T-cell (primary cell): ENCODE measurements at regions of chr17 and their contacts with region 1.

Region 1: GRCh38 chr17:47970704-47971463 is at the start of gene CDK5RAP3:
- DNase-seq: peak; percentile 93 to 99 (median 96)
- ATAC-seq: peak; percentile 98 to 99 (median 99)
- H3K4me3 ChIP-seq: peak within 1 kb of the TSS; percentile 63 to 75
- H3K4me3 Mint-ChIP-seq: peak within 1 kb of the TSS; percentile 95 to 99 (median 96)
- H3K27ac ChIP-seq: peak within 1 kb of the TSS; percentile 19
- H3K27ac Mint-ChIP-seq: peak within 1 kb of the TSS; percentile 77
- H3K4me1 ChIP-seq: peaks cover 2 to 25% of the 10 kb centered on the region in 2 experiments
- H3K4me1 Mint-ChIP-seq: peaks cover 28 to 36% (median 32%) of the 10 kb centered on the region in 3 donors
- H3K27me3 ChIP-seq: peaks cover 0 to 7% of the 10 kb centered on the region in 2 experiments
- H3K27me3 Mint-ChIP-seq: no peaks in the 10 kb centered on the region
- total RNA-seq, gene CDK5RAP3: 247 to 349 (median 318) TPM

Region 2: DNA sequence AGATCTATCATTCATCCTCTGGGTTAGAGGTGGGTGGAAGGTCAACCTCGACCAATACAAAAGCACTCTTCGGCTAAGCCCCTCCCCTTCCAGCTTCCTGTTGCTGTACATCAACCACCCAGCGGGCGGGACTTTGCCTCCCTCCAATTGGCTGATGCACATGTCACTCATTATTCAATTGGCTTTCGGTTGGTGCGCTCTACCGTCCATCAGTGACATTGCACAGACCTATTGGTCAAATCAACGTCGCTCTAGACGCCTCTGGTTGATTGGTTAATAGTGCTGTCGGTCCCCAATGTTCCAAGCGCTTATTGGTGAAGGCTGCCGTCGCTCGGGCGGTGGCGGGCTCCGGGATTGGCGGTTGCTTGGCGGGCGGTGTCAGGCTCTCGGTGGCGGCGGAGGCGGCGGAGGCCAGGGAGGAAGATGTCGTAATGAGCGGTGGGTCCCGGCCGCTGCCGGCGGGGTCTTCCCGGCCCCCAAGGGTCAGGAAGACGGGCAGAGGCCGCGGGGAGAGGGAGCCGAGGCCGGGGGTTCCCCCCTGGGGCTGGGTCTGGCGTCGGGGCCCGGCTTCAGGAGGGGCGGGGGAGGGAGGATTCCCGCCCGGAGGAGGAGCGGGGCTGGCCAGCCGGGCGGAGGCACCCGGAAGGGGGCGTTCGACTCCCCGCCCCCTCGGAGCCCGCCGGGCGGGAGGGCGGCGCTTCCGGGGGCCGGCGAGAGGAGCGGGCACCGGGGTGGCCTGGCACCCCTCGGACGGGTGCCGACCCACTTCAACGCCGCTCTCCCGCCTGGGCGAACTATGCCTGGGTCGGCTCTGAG is 74.8 kb before region 1 on chr17 and contains the start of gene SP2:
- CTCF ChIA-PET with region 1: interaction called in 1 of 2 experiments, 12 read pairs
- POLR2A ChIA-PET with region 1: interaction called in 1 of 2 experiments, 4 read pairs
- DNase-seq: peak; percentile 95 to 100 (median 99)
- ATAC-seq: peak; percentile 88 to 91 (median 89)
- H3K4me3 ChIP-seq: peak within 1 kb of the TSS; percentile 94 to 95
- H3K4me3 Mint-ChIP-seq: peak within 1 kb of the TSS; percentile 90 to 98 (median 98)
- H3K27ac ChIP-seq: peak within 1 kb of the TSS; percentile 92
- H3K27ac Mint-ChIP-seq: peak within 1 kb of the TSS; percentile 98 to 100
- H3K4me1 ChIP-seq: peaks cover 11 to 23% of the 10 kb centered on the region in 2 experiments
- H3K4me1 Mint-ChIP-seq: peaks cover 45 to 55% (median 51%) of the 10 kb centered on the region in 3 donors
- H3K27me3 ChIP-seq: no peaks in the 10 kb centered on the region
- H3K27me3 Mint-ChIP-seq: no peaks in the 10 kb centered on the region
- total RNA-seq, gene SP2: 27.1 to 41.6 (median 32.8) TPM

Region 3: DNA sequence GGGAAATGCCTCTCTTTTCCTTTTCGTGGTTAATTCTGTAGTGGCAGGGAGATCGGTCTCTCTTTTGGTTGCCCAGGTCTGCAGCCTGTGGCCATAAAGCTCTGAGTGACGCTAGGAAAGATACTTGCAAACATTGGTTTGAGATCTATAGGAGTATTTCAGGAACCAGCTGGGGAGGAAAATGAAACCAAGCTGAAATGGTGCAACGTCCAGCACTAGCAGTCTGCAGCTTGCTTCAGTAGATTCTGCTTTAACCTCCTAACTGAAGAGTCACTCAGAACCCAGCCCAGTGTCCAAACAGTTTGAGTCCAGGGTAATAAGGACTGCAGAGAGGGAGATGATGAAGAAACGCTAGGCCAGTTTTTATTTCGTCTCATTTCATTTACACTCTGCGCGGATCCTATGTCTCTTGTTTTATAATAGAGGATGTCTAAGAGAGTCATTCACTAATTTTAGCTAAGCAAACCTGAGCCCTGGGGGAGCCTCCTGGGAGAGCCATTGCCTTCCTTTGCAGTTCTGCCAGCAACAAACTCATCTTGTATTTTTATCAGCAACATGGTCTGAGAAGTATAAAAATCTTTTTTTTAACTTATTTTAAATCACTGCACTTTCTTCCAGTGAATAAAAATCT is 62.8 kb before region 1 on chr17:
- CTCF ChIA-PET with region 1: no interaction called
- POLR2A ChIA-PET with region 1: no interaction called
- DNase-seq: no peak
- ATAC-seq: no peak
- H3K4me3 ChIP-seq: no peak overlapping the region
- H3K4me3 Mint-ChIP-seq: no peak overlapping the region
- H3K27ac ChIP-seq: no peak overlapping the region
- H3K27ac Mint-ChIP-seq: no peak overlapping the region
- H3K4me1 ChIP-seq: peaks cover 0 to 5% of the 10 kb centered on the region in 2 experiments
- H3K4me1 Mint-ChIP-seq: peaks cover 39 to 49% (median 42%) of the 10 kb centered on the region in 3 donors
- H3K27me3 ChIP-seq: no peaks in the 10 kb centered on the region
- H3K27me3 Mint-ChIP-seq: no peaks in the 10 kb centered on the region

Region 4: GRCh38 chr17:47941236-47941994 is 29.5 kb before region 1 on chr17 and contains the start of gene PNPO:
- CTCF ChIA-PET with region 1: interaction called, 10 to 59 read pairs
- POLR2A ChIA-PET with region 1: interaction called in 1 of 2 experiments, 6 read pairs
- DNase-seq: peak; percentile 79 to 98 (median 94)
- ATAC-seq: peak; percentile 97 to 99 (median 98)
- H3K4me3 ChIP-seq: peak within 1 kb of the TSS; percentile 61 to 86
- H3K4me3 Mint-ChIP-seq: peak within 1 kb of the TSS; percentile 85 to 87 (median 86)
- H3K27ac ChIP-seq: peak within 1 kb of the TSS; percentile 77
- H3K27ac Mint-ChIP-seq: peak within 1 kb of the TSS; percentile 82 to 86
- H3K4me1 ChIP-seq: peaks cover 17 to 53% of the 10 kb centered on the region in 2 experiments
- H3K4me1 Mint-ChIP-seq: peaks cover 38 to 48% (median 47%) of the 10 kb centered on the region in 3 donors
- H3K27me3 ChIP-seq: no peaks in the 10 kb centered on the region
- H3K27me3 Mint-ChIP-seq: no peaks in the 10 kb centered on the region
- total RNA-seq, gene PNPO: 10.3 to 18.5 (median 15.7) TPM

Region 5: DNA sequence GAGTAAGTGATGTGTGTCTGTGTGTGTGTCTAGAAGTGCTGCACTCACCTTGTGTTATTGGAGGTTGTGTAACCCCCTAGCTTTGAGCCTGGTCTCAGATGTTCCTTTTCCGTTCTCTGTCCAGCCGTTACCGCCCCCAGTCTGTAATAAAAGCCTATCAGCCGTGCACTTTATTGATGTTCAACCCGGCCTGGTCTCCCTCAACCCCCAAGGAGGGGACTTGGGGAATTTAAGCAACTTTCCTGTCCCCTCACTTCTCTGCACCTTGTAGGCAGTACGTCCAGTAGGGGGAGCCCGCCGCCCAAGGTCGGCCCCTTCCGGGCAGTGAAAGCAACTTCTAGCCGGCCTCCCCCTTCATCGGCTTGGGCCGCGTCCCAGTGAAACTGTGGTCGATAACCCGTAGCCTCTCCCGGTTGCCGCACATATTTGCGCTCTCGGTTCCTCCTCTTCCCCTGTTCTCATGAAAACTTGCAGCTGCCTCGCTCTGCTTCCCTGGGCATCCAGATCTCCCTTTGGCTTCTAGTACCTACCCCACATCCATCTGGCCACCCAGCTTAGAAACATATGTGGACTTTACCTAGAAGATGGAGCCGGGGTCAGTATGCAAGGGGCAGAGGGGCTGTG is 21.6 kb before region 1 on chr17:
- CTCF ChIA-PET with region 1: interaction called, 10 to 59 read pairs
- POLR2A ChIA-PET with region 1: interaction called, 5 to 6 read pairs
- DNase-seq: peak; percentile 24 to 82 (median 66)
- ATAC-seq: peak; percentile 69 to 75 (median 72)
- H3K4me3 ChIP-seq: peak overlapping the region; percentile 36 to 42
- H3K4me3 Mint-ChIP-seq: peak overlapping the region; percentile 61 to 72 (median 67)
- H3K27ac ChIP-seq: peak overlapping the region; percentile 21
- H3K27ac Mint-ChIP-seq: peak overlapping the region; percentile 83 to 92
- H3K4me1 ChIP-seq: peaks cover 26 to 44% of the 10 kb centered on the region in 2 experiments
- H3K4me1 Mint-ChIP-seq: peaks cover 37 to 47% (median 42%) of the 10 kb centered on the region in 3 donors
- H3K27me3 ChIP-seq: no peaks in the 10 kb centered on the region
- H3K27me3 Mint-ChIP-seq: no peaks in the 10 kb centered on the region

Region 6: DNA sequence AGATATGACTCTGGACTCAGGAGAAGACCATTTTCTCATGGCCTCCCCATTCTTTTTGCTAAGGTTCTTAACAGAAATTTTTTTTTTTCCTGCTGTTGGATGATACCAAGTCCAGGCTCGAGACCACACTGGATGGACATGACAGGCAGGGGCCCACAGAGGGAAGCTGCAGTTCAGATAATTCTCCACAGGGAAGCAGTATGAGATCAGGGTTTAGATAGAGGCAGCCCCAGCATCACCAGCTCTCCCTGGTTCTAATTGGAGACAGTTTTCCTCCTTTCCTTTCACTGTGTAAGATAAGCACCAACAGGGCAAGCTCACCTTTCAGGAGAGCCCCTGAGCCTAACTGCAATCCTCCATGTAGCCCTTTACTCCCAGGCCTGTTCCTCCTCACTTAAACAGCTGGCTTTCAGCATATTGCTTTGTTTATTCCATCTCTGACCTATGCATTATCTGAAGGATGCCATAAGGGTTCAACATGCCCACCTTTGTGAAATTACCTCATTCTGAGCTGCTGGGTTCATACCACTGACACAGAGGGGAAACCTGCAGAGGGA is 244.8 kb after region 1 on chr17:
- CTCF ChIA-PET with region 1: no interaction called
- POLR2A ChIA-PET with region 1: no interaction called
- DNase-seq: no peak
- ATAC-seq: no peak
- H3K4me3 ChIP-seq: no peak overlapping the region
- H3K4me3 Mint-ChIP-seq: no peak overlapping the region
- H3K27ac ChIP-seq: no peak overlapping the region
- H3K27ac Mint-ChIP-seq: peak overlapping the region; percentile 39 to 55
- H3K4me1 ChIP-seq: no peaks in the 10 kb centered on the region
- H3K4me1 Mint-ChIP-seq: peaks cover 9 to 22% (median 17%) of the 10 kb centered on the region in 3 donors
- H3K27me3 ChIP-seq: no peaks in the 10 kb centered on the region
- H3K27me3 Mint-ChIP-seq: no peaks in the 10 kb centered on the region